H1 (cell line): ENCODE measurements at regions of chr1 and their contacts with region 1.

Region 1: DNA sequence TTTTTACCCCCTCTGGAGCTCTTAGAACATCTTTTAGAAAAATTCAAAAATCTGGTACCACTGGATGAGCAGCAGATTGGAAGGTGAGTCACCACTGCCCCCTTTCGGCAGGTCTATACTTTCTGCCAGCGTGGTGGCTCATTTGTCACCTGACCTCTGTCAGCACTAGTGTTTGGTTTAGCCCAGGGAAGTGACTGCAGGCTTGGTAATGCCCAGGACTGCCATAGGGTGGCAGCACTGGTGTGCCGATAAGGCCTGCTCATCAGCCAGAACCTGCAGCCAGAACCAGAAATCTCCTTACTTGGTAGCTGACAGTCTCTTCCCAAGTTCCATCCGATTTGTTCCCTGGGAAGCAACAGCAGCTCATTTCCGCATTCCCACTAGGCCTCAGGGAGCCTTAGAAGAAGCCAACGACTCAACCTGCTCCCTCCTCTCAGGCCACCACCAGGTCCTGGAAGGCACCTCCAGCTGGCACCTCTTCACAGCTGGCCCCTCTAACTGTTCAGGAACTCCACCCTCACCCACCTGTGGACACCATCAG is 6.8 kb downstream of the SMIM12 start:
- DNase-seq: peak; percentile 95 to 96
- H3K4me3 ChIP-seq: no peak overlapping the region
- H3K27ac ChIP-seq: peak overlapping the region; percentile 46; the same call in 1 of the 2 replicates
- H3K4me1 ChIP-seq: peaks cover 0 to 9% (median under 1%) of the 10 kb centered on the region in 4 experiments; a peak in 3 of 7 replicates
- H3K27me3 ChIP-seq: no peaks in the 10 kb centered on the region
- CTCF ChIP-seq: peak; percentile 95 to 100 (median 97)
- EP300 ChIP-seq: no peak
- POLR2A ChIP-seq: peak in 1 of 2 experiments; percentile 25; a peak in 1 of 3 replicates
- RAD21 ChIP-seq: peak; percentile 85 to 86

Region 2: DNA sequence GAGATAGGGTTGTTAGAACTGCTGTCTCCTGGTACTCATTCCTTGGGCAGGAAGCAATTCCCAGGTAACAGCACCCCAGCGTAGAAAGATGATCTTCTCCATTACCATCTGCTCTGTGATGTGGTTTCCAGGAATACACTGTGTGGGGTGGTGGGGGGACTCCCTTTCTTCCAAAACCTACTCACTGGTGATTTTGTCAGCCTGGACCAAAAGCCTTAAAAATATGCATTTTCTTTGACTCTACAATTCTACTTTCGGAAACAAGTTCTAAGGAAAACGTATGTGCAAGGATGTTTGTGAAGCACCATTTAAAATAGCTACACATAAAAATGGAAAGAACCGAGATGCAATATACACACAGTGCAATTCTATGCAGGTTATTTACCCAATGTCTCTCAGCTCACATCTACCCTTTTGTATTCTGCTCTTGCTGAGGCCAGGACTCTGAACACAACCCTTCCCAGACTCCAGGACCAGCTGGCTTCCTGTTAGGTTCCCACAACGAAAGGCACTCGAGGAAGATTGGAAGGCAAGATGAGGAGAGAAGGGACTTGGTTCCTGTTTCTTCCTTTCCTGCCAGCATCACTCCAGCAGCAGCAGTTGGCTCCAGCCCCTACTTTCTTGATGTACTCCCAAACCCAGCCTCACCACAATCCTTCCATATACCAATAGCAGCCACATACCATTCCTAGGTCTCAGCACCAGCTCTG is 130.9 kb before region 1 on chr1:
- CTCF ChIA-PET with region 1: no interaction called
- POLR2A ChIA-PET with region 1: no interaction called
- DNase-seq: no peak
- H3K4me3 ChIP-seq: no peak overlapping the region
- H3K27ac ChIP-seq: no peak overlapping the region
- H3K4me1 ChIP-seq: no peaks in the 10 kb centered on the region
- H3K27me3 ChIP-seq: no peaks in the 10 kb centered on the region
- CTCF ChIP-seq: no peak
- EP300 ChIP-seq: no peak
- POLR2A ChIP-seq: no peak
- RAD21 ChIP-seq: no peak

Region 3: DNA sequence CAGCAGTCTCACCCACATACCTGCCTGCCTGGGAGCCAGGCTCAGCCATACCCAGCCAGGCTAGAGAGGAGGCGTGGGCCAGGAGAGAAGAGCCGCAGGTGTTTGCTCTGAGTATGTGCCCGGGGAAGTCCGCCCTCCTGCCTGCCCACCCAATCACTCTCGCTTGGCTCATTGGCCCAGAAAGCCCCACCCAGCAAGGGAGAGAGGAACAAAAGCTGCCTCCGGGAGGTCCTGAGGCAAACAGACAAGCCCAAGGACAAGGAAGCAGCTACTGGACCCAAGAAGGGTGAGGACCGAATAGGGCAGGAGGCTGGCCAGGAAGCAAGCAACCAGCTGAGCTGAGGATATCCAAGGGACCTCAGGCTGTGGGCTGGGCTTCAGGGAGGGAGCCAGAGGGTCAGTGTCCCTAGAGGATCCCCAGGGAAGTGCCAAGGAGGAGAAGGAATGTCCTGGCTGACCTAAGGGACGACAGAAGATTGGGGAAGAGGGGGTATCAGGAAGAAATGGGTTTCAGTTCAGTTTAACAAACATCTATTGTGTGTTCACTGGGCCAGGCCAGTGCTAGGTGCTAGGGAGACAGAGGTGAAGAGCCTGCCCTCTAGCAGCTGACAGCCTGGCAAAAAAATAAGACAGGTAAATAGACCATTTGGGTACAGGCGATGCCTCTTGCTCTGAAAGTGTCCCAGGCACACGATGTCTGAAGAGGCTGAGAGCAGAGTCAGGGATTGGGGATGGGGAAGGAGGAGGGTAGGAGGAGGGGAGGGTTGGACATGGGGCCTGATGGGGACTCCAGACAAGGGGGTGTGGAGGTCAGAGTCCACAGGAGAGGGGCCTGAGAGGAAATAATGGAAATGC is 93.0 kb before region 1 on chr1 and contains the start of gene GJB4:
- CTCF ChIA-PET with region 1: interaction called, 10 read pairs
- POLR2A ChIA-PET with region 1: no interaction called
- DNase-seq: no peak
- H3K4me3 ChIP-seq: no peak within 1 kb of the TSS
- H3K27ac ChIP-seq: no peak within 1 kb of the TSS
- H3K4me1 ChIP-seq: peaks cover 5 to 24% (median 11%) of the 10 kb centered on the region in 4 experiments
- H3K27me3 ChIP-seq: no peaks in the 10 kb centered on the region; a peak in 1 of 7 replicates
- CTCF ChIP-seq: peak; percentile 6 to 47 (median 28); a peak in 2 of 4 replicates
- EP300 ChIP-seq: no peak
- POLR2A ChIP-seq: no peak
- RAD21 ChIP-seq: no peak
- total RNA-seq, gene GJB4: 0.11 and 0.20 TPM in 2 replicates

Region 4: DNA sequence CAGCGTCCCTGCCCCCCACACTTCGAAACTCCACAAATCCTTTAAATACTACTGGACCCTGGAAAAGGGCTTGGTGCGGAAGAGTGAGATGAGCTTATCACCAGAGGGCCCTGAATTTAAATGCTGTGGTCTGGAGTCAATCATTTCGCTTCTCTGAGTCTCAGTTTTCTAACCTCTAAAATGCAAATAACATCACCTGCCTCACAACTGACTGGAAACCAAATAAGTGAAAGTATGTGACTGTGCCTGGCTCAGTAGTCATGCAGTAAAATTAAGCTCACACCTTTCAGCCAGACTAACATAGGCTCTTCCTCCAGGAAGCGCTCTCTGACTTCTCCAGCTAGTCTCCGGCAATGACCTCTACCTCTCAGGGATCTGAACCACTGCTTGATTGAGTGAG is 55.8 kb before region 1 on chr1:
- CTCF ChIA-PET with region 1: interaction called, 230 read pairs
- POLR2A ChIA-PET with region 1: interaction called, 5 read pairs
- DNase-seq: no peak
- H3K4me3 ChIP-seq: no peak overlapping the region
- H3K27ac ChIP-seq: no peak overlapping the region
- H3K4me1 ChIP-seq: peaks cover 0 to 12% (median 7%) of the 10 kb centered on the region in 4 experiments; a peak in 4 of 7 replicates
- H3K27me3 ChIP-seq: peaks cover 0 to 11% (median 8%) of the 10 kb centered on the region in 4 experiments; a peak in 4 of 7 replicates
- CTCF ChIP-seq: peak in 1 of 3 experiments; percentile 5; a peak in 2 of 4 replicates
- EP300 ChIP-seq: no peak
- POLR2A ChIP-seq: no peak
- RAD21 ChIP-seq: peak in 1 of 2 experiments; percentile 24; a peak in 1 of 4 replicates

Region 5: DNA sequence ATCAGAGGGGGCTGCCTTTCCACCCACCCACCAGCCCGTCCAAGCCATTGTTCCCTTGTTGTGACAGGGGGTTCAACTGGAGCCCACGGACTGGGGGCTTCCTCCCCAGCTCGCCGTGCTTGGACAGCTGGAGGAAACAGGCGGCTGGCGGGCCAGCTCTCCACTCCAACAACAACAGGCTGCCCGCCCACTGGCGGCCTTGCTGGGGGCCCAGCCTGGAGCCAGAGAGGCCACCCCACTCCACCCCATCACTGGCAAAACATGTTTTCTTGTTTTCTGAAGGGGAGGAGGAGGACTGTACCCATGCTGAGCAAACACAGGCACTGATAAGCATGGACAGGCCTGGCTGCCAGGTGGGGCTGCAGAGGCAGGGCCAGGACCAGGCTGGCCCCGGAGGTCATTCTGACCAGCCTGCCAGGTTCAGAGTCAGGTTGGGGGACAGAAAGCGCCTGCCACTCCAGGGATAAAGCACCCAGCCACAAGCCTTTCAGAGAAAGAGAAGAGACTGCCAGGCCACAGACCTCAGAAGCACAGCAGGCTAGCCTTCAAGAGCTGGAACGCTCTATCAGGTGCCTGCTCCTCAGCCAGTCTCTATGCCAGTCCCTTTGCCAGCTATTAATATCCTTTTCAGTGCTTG is 27.2 kb before region 1 on chr1:
- CTCF ChIA-PET with region 1: interaction called, 17 read pairs
- POLR2A ChIA-PET with region 1: no interaction called
- DNase-seq: peak in 1 of 2 experiments; percentile 40
- H3K4me3 ChIP-seq: no peak overlapping the region
- H3K27ac ChIP-seq: no peak overlapping the region
- H3K4me1 ChIP-seq: no peaks in the 10 kb centered on the region; a peak in 2 of 7 replicates
- H3K27me3 ChIP-seq: no peaks in the 10 kb centered on the region
- CTCF ChIP-seq: no peak
- EP300 ChIP-seq: no peak
- POLR2A ChIP-seq: no peak
- RAD21 ChIP-seq: no peak

Region 6: GRCh38 chr1:34865981-34866761 is 13.4 kb after region 1 on chr1:
- CTCF ChIA-PET with region 1: interaction called, 103 read pairs
- POLR2A ChIA-PET with region 1: interaction called, 11 read pairs
- DNase-seq: peak; percentile 68 to 98
- H3K4me3 ChIP-seq: peak overlapping the region; percentile 33 to 69 (median 62)
- H3K27ac ChIP-seq: peak overlapping the region; percentile 17; the same call in 1 of the 2 replicates
- H3K4me1 ChIP-seq: peaks cover 0 to 7% (median 3%) of the 10 kb centered on the region in 4 experiments; a peak in 4 of 7 replicates
- H3K27me3 ChIP-seq: peaks cover 0 to 11% (median 4%) of the 10 kb centered on the region in 4 experiments; a peak in 2 of 7 replicates
- CTCF ChIP-seq: peak; percentile 77 to 89 (median 89)
- EP300 ChIP-seq: peak in 1 of 2 experiments; percentile 34; a peak in 1 of 3 replicates
- POLR2A ChIP-seq: peak in 1 of 2 experiments; percentile 54; a peak in 2 of 3 replicates
- RAD21 ChIP-seq: peak; percentile 46 to 61

Region 7: GRCh38 chr1:35005711-35006110 is 153.0 kb after region 1 on chr1:
- CTCF ChIA-PET with region 1: no interaction called
- POLR2A ChIA-PET with region 1: no interaction called
- DNase-seq: no peak
- H3K4me3 ChIP-seq: no peak overlapping the region
- H3K27ac ChIP-seq: no peak overlapping the region
- H3K4me1 ChIP-seq: no peaks in the 10 kb centered on the region
- H3K27me3 ChIP-seq: no peaks in the 10 kb centered on the region
- CTCF ChIP-seq: no peak
- EP300 ChIP-seq: no peak
- POLR2A ChIP-seq: no peak
- RAD21 ChIP-seq: no peak